Posterior vena cava (tissue), 2 donors: ENCODE measurements at regions of chr3 and their contacts with region 1.

Region 1: DNA sequence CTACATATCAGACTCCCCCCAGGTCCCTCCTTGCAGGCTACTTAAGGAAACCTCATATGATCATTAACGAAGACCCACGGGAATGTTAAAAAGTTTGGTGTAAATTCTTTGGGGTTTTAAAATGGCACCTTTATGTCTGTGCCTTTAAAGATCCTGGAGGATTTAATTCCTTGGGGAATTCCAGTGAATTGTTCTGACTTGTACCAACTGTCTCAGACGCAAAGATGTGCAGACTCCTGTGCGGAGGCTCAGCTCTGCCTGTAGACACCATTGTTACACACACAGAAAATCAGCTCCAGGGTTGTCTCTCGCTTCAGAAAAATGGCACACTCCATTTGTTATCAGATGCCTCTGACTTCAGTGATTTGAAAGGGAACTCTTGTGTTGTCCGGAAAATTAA is 414.4 kb upstream of the CFAP20DC start:
- DNase-seq: no peak

Region 2: GRCh38 chr3:58502872-58503271 is 961.3 kb before region 1 on chr3:
- intact Hi-C with region 1: no loop called
- DNase-seq: no peak

Region 3: DNA sequence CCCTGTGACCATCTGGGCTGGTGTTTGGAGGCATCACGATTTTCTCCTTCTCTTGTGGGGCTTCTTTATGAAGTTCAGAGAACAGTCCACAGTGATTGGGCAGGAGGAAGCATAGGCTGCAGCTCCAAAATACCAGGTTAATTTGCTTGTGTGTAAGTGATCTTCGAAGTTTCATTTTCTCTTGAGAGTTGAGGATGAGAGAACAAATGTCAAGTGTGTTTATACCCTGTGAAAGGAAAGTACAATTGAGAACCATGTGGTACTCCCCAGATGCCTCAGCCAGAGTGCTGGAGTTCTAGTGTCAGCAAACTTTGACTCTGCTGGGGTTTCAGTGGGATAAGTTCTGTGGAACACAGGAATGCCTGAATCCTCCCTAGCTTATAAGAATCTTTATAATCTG is 57.2 kb before region 1 on chr3:
- intact Hi-C with region 1: no loop called
- DNase-seq: no peak

Region 4: GRCh38 chr3:59522550-59522949 is 58.4 kb after region 1 on chr3:
- intact Hi-C with region 1: loop called in 1 of 2 experiments (anchors 2 kb)
- DNase-seq: no peak